Panc1 (cell line): ENCODE measurements at regions of chr12 and their contacts with region 1.

Region 1: GRCh38 chr12:117821480-117822175 is 147.2 kb downstream of the KSR2 start:
- DNase-seq: no peak
- ATAC-seq: no peak
- H3K4me3 ChIP-seq: no peak overlapping the region
- H3K27ac ChIP-seq: no peak overlapping the region
- H3K4me1 ChIP-seq: no peaks in the 10 kb centered on the region
- H3K27me3 ChIP-seq: peaks cover 3% of the 10 kb centered on the region; the same call in 1 of the 2 replicates
- CTCF ChIP-seq: no peak

Region 2: GRCh38 chr12:117803001-117803400 is 18.6 kb before region 1 on chr12:
- CTCF ChIA-PET with region 1: no interaction called
- POLR2A ChIA-PET with region 1: no interaction called
- in situ Hi-C with region 1: no loop called
- intact Hi-C with region 1: loop called (anchors 1 kb)
- DNase-seq: no peak
- ATAC-seq: no peak
- H3K4me3 ChIP-seq: no peak overlapping the region
- H3K27ac ChIP-seq: no peak overlapping the region
- H3K4me1 ChIP-seq: no peaks in the 10 kb centered on the region
- H3K27me3 ChIP-seq: peaks cover 6% of the 10 kb centered on the region; the same call in 1 of the 2 replicates
- CTCF ChIP-seq: no peak